Activated CD4-positive, alpha-beta T cell treated with anti-CD3 and anti-CD28 coated beads for 36 hours (primary cell): ENCODE measurements at regions of chr14 and their contacts with region 1.

Region 1: DNA sequence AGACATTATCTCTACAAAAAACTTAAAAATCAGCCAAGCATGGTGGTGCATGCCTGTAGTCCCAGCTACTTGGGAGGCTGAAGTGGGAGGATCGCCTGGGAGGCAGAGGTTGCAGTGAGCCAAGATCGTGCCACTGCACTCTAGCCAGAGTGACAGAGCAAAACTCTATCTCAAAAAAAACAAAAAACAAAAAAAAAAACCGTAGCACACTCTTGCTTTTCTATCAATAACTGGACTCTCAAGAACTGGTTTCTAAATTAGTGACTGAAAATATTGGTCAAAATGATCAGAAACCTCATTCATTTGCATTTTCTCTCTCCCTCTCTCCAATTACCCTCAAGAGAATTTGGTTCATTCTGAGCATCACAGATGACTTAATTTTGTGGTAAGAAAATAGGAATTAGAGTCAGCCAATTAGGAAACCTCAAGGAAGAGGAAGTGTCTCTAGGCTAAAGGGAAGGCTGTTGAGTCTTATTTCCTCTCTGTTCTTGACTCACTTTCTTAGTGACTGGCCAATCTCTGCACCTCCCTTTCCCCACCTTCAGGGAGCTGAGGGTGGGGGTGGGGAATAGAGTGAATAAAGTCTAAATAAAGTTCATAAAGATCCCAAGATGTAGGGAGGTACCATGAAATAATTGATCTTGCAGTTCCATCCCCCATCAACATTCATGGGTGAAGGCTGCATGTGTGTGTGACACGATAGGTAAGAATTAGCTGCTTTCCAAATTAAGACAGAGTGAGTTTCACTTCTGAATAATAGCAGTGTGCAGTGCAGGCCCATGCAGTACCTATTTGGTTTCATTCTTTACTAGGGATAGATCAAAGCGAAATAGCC is 6.8 kb upstream of the PSMA6 start:
- DNase-seq: peak; percentile 40
- ATAC-seq: peak; percentile 59
- H3K4me3 Mint-ChIP-seq: peak overlapping the region; percentile 24
- H3K27ac Mint-ChIP-seq: peak overlapping the region; percentile 97
- H3K4me1 Mint-ChIP-seq: peaks cover 56% of the 10 kb centered on the region
- H3K27me3 Mint-ChIP-seq: no peaks in the 10 kb centered on the region

Region 2: DNA sequence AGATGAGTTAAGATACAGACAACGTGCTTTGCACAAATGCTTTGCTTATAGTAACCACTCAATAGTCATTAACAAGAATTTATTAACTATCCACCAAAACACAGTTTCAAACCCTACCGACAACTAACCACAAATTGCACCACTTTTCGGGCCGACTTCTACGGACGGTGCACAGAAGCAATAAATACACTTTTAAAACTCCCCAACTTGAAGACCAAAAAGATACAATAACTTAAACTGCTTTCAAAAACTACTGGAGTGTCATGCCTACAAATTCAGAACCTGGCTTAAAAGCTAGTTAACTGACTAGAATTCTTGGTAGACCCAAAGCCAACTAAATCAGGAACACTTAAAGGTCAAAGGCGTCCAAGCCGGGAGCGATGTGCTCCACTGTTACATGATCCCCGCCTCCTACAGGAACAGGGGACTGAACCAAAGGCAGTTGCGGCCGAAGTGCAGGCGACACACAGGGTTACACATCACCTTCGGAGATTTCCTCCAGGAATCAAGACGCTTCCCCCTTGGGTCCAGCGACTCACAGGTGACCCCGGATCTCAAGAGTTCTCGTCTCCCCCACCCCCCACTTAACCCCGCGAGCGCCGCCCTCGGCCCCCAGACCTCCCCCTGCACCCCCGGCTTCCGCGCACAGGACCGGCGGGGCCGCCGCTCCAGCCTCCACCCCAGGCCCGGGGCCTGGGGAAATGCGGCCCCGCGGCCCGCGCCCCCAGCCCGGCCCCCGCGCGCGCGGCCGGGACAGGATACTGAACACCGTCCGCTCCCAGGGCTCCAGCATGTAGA is 823.9 kb before region 1 on chr14:
- CTCF ChIA-PET with region 1: no interaction called
- POLR2A ChIA-PET with region 1: no interaction called
- intact Hi-C with region 1: loop called in 1 of 2 experiments (anchors 5 kb)
- DNase-seq: peak; percentile 50
- ATAC-seq: peak; percentile 62
- H3K4me3 Mint-ChIP-seq: peak overlapping the region; percentile 91
- H3K27ac Mint-ChIP-seq: peak overlapping the region; percentile 85
- H3K4me1 Mint-ChIP-seq: peaks cover 19% of the 10 kb centered on the region
- H3K27me3 Mint-ChIP-seq: no peaks in the 10 kb centered on the region

Region 3: DNA sequence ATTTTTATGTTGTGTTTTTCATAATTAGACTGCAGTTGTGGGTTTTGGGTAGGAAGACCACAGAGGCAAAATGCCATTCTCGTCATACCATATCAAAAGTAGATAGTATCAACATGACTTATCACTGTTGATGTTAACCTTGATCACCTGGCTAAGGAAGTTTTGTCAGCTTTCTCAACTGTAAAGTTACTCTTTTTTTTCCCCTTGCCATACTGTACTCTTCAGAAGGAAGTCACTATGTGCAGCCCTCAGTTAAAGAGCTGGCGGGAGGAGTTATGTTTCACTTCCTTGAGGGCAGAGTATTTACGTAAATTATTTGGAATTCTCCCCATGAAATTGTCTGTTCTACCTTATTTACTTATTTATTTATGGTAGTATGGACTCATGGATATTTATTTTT is 84.3 kb before region 1 on chr14:
- CTCF ChIA-PET with region 1: no interaction called
- POLR2A ChIA-PET with region 1: no interaction called
- intact Hi-C with region 1: loop called in 1 of 2 experiments (anchors 5 kb)
- DNase-seq: peak; percentile 18
- ATAC-seq: peak; percentile 50
- H3K4me3 Mint-ChIP-seq: peak overlapping the region; percentile 31
- H3K27ac Mint-ChIP-seq: peak overlapping the region; percentile 83
- H3K4me1 Mint-ChIP-seq: peaks cover 48% of the 10 kb centered on the region
- H3K27me3 Mint-ChIP-seq: no peaks in the 10 kb centered on the region

Region 4: GRCh38 chr14:35229495-35230089 is 55.8 kb before region 1 on chr14:
- CTCF ChIA-PET with region 1: interaction called, 11 read pairs
- POLR2A ChIA-PET with region 1: no interaction called
- intact Hi-C with region 1: loop called (anchors 2 to 5 kb)
- DNase-seq: no peak
- ATAC-seq: peak; percentile 63
- H3K4me3 Mint-ChIP-seq: no peak overlapping the region
- H3K27ac Mint-ChIP-seq: peak overlapping the region; percentile 51
- H3K4me1 Mint-ChIP-seq: peaks cover 27% of the 10 kb centered on the region
- H3K27me3 Mint-ChIP-seq: no peaks in the 10 kb centered on the region

Region 5: DNA sequence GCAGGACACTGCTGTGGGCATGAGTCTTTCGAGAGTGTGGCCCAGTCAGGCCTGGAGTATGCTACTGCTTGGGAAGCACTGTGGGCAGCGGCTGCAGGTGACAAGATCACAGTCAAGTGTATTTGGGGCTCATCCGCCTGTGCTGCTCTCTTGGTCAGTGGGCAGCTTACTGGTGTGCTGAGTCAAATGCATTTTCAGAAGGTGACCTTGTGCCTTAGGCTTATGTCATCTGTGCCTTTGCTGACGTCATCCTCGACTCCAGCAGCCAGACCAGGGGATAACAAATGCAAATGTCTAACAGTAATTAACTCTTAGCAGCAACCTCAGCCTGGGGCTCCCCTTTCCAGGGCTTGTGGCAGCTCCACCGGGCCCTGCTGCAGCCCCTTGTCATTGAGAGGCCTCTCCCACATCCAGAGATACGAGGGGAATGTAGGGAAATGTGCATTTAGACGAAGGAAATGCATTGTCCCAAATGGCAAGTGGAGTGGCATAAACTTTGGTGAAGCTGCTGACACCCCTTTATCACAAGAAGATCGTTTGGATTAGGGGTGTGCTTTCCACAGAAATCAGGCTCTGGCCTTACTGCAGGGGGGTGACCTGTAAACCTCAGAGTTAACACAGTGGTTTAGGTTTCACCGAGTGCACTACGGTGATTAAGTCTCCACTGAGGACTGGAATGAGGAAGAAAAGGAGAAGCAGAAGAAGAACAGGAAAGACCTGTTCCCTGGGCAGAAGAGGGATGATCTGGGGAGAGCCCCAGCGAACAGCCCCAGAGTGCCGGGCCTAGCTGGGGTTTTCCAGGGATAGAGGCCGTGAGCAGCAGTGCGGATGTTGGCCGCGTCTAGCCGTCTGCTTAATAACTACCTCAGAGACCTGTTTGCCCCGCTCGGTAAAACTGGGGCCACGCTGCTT is 46.5 kb after region 1 on chr14:
- CTCF ChIA-PET with region 1: no interaction called
- POLR2A ChIA-PET with region 1: interaction called, 9 read pairs
- intact Hi-C with region 1: loop called in 1 of 2 experiments (anchors 2 kb)
- DNase-seq: no peak
- ATAC-seq: no peak
- H3K4me3 Mint-ChIP-seq: no peak overlapping the region
- H3K27ac Mint-ChIP-seq: peak overlapping the region; percentile 96
- H3K4me1 Mint-ChIP-seq: peaks cover 32% of the 10 kb centered on the region
- H3K27me3 Mint-ChIP-seq: no peaks in the 10 kb centered on the region